ENCODE measurements at regions of chr20 and their contacts with region 1.

Region 1: GRCh38 chr20:36573103-36573794 is at the start of gene TGIF2:
- DNase-seq: peak; percentile 92
- ATAC-seq: peak; percentile 72
- H3K4me3 ChIP-seq: peak within 1 kb of the TSS; percentile 86 to 90 (median 86)
- H3K27ac ChIP-seq: peak within 1 kb of the TSS; percentile 89
- H3K4me1 ChIP-seq: peaks cover 38% of the 10 kb centered on the region
- H3K27me3 ChIP-seq: no peaks in the 10 kb centered on the region; a peak in 1 of 5 replicates
- CTCF ChIP-seq: 0 out of 2 replicates have a peak, but pooled peaks have one; percentile 9
- EP300 ChIP-seq: peak; percentile 37 to 44
- POLR2A ChIP-seq: peak; percentile 83 to 84
- RAD21 ChIP-seq: peak; percentile 55
- total RNA-seq, gene TGIF2: 53.9 and 60.3 TPM in 2 replicates

Region 2: DNA sequence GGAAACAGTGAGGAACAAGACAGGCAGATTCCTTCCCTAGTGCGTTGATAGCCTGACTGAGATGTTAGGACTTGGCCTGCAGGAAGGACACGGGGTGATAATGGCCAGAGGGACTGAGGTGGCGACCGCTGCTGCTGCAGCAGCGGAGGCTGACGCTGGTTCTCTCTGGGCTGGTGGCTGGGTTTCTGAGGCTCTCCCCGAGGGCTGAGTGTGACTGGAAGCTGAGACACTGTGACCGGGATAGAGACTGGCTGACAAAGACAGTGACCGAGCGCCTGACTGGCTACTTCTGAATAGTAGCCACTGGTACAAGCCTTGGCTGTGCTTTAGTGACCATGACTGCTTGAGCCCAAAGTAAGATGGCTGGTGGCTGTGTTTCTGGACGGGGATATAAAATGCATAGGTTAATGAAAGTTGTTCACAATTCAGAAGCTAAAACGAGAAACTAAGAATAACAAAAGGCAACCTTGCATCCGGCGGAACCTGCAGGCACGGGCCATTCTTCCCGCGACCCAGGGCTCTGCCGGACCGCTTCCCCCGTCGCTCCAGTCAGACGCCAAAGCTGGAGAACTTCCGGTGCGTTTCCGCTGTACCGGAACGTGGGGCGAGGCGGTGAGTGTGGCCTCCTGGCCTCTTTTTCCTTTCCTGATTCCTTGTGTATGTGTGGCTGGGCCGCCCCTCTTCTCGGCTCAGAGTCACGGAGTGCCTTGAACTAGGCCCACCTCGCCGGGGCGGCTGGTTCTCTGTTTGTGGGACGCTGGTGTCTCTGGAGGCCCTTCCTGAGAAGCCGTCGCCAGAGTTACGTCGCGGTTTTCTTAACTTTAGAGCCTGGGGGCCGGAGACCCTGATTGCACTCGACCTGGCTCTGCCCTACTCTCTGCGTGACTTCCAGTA is 337.1 kb before region 1 on chr20 and contains the start of gene AAR2:
- CTCF ChIA-PET with region 1: no interaction called
- POLR2A ChIA-PET with region 1: no interaction called
- in situ Hi-C with region 1: no loop called
- intact Hi-C with region 1: no loop called
- DNase-seq: peak; percentile 83
- ATAC-seq: peak; percentile 96
- H3K4me3 ChIP-seq: peak within 1 kb of the TSS; percentile 82 to 89 (median 88)
- H3K27ac ChIP-seq: peak within 1 kb of the TSS; percentile 75
- H3K4me1 ChIP-seq: peaks cover 35% of the 10 kb centered on the region
- H3K27me3 ChIP-seq: no peaks in the 10 kb centered on the region; a peak in 1 of 5 replicates
- CTCF ChIP-seq: peak; percentile 43; the same call in 1 of the 2 replicates
- EP300 ChIP-seq: peak in 1 of 2 experiments; percentile 60; a peak in 1 of 4 replicates
- POLR2A ChIP-seq: peak; percentile 94 to 96
- RAD21 ChIP-seq: peak; percentile 20
- total RNA-seq, gene AAR2: 46.2 and 56.5 TPM in 2 replicates

Region 3: GRCh38 chr20:36460648-36461599 is 112.3 kb before region 1 on chr20:
- CTCF ChIA-PET with region 1: no interaction called
- POLR2A ChIA-PET with region 1: interaction called, 5 read pairs
- in situ Hi-C with region 1: no loop called
- intact Hi-C with region 1: loop called (anchors 10 kb)
- DNase-seq: peak; percentile 89
- ATAC-seq: peak; percentile 63
- H3K4me3 ChIP-seq: peak overlapping the region in 2 of 3 experiments; percentile 71 to 90; a peak in 4 of 6 replicates
- H3K27ac ChIP-seq: peak overlapping the region; percentile 57
- H3K4me1 ChIP-seq: peaks cover 52% of the 10 kb centered on the region
- H3K27me3 ChIP-seq: no peaks in the 10 kb centered on the region; a peak in 1 of 5 replicates
- CTCF ChIP-seq: peak; percentile 31; the same call in 1 of the 2 replicates
- EP300 ChIP-seq: peak; percentile 39 to 55; a peak in 2 of 4 replicates
- POLR2A ChIP-seq: peak; percentile 76 to 83
- RAD21 ChIP-seq: peak; percentile 61

Region 4: DNA sequence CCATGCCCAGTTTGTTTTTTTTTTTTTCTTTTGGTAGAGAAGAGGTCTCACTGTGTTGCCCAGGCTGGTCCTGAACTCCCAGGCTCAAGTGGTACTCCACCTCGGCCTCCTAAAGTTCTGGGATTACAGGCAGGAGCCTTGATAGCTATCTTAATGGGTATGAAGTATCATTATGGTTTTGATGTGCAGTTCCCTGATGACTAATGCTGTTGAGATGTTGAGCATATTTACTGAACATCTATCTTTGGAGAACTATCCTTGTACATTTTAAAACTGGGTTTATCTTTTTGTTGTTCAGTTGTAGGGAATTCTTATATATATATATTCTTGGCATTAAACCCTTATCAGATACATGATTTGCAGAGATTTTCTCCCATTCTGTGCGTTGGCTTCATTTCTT is 53.3 kb before region 1 on chr20:
- CTCF ChIA-PET with region 1: no interaction called
- POLR2A ChIA-PET with region 1: no interaction called
- in situ Hi-C with region 1: no loop called
- intact Hi-C with region 1: no loop called
- DNase-seq: no peak
- ATAC-seq: no peak
- H3K4me3 ChIP-seq: no peak overlapping the region
- H3K27ac ChIP-seq: no peak overlapping the region
- H3K4me1 ChIP-seq: no peaks in the 10 kb centered on the region
- H3K27me3 ChIP-seq: no peaks in the 10 kb centered on the region
- CTCF ChIP-seq: no peak
- EP300 ChIP-seq: no peak
- POLR2A ChIP-seq: no peak
- RAD21 ChIP-seq: no peak

Region 5: GRCh38 chr20:36550797-36551299 is 22.4 kb before region 1 on chr20:
- CTCF ChIA-PET with region 1: interaction called, 4 read pairs
- POLR2A ChIA-PET with region 1: interaction called, 6 read pairs
- in situ Hi-C with region 1: no loop called
- intact Hi-C with region 1: loop called (anchors 2 kb)
- DNase-seq: no peak
- ATAC-seq: no peak
- H3K4me3 ChIP-seq: no peak overlapping the region; a peak in 1 of 6 replicates
- H3K27ac ChIP-seq: no peak overlapping the region
- H3K4me1 ChIP-seq: peaks cover 51% of the 10 kb centered on the region
- H3K27me3 ChIP-seq: no peaks in the 10 kb centered on the region
- CTCF ChIP-seq: no peak
- EP300 ChIP-seq: no peak
- POLR2A ChIP-seq: no peak
- RAD21 ChIP-seq: no peak

Region 6: DNA sequence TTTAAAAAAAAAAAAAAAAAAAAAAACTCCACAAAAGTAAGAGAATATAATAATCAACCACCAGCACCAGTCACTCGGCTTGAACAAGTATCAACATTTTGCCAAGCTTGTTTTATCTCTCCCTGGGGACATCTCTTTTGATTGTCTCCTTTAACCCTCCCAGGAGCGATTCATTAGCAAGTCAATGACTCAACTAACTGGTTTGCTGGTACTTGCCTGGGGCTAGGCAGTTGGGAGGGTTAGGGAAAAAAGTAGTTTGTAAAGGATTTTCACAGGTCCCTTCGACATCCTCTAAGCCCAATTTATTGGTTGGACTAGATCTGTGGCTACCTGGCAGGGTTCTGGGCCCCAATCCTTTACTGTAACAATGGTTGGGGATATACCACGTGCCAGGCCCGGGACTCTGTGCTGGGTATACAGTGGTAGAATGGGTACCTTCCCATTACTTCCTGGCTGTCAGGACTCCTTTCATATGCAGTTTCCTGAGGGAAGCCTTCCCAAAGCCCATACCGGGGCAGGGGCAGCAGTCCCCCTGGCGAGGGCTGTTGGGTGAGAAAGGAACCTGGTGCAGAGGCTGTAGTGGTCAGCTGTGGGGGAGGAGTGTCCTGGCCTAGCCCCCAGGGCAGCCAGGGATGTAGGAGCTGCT is 12.3 kb after region 1 on chr20:
- CTCF ChIA-PET with region 1: interaction called, 3 read pairs
- POLR2A ChIA-PET with region 1: interaction called, 28 read pairs
- in situ Hi-C with region 1: no loop called
- intact Hi-C with region 1: no loop called
- DNase-seq: no peak
- ATAC-seq: peak; percentile 6; the same call in 1 of the 3 replicates
- H3K4me3 ChIP-seq: no peak overlapping the region
- H3K27ac ChIP-seq: no peak overlapping the region
- H3K4me1 ChIP-seq: no peaks in the 10 kb centered on the region
- H3K27me3 ChIP-seq: no peaks in the 10 kb centered on the region
- CTCF ChIP-seq: no peak
- EP300 ChIP-seq: no peak
- POLR2A ChIP-seq: no peak
- RAD21 ChIP-seq: no peak

Region 7: GRCh38 chr20:36591854-36592641 is 18.8 kb after region 1 on chr20:
- CTCF ChIA-PET with region 1: interaction called, 10 read pairs
- POLR2A ChIA-PET with region 1: interaction called, 11 read pairs
- in situ Hi-C with region 1: no loop called
- intact Hi-C with region 1: loop called (anchors 1 kb)
- DNase-seq: peak; percentile 73
- ATAC-seq: peak; percentile 57
- H3K4me3 ChIP-seq: no peak overlapping the region
- H3K27ac ChIP-seq: no peak overlapping the region
- H3K4me1 ChIP-seq: no peaks in the 10 kb centered on the region
- H3K27me3 ChIP-seq: no peaks in the 10 kb centered on the region
- CTCF ChIP-seq: peak; percentile 79
- EP300 ChIP-seq: no peak
- POLR2A ChIP-seq: no peak
- RAD21 ChIP-seq: peak; percentile 69

Region 8: DNA sequence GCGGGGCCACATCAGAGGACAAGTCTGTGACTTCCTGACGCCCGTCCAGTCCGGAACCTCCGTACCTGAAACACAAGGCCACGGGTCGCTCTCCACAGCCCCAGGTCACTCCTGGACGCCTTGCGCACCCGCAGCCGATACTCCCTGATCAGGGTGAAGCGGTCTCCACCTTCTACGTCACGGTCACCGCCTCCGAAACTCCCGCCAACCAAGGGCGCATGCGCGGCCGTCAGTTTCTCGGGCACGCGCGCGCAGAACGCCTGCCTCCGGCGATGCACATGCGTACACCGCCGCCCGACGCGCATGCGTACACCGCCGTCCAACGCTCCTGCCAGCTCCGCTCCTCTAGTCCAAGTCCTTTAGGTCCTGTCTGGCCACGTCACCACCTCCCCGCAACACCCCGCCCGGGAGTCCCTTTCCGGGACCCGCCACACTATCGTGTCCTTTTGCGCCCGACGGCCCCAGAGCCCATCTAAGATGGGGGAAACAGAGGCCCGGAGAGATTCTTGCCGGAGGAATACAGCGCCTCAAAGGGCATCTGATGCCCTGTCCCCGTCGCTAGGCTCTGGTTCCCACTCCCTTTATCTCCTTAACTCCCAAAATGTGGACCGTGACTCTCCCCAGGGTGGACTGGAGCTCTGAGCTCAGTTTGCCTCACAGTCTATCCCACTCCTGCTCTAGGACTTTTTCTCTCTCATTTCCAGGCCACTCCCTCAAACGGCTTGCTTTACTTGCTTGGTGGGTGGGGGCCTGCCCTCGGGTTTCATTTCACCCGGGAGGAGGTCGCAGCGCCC is 200.5 kb after region 1 on chr20 and contains the start of gene DSN1:
- CTCF ChIA-PET with region 1: no interaction called
- POLR2A ChIA-PET with region 1: interaction called, 14 read pairs
- in situ Hi-C with region 1: no loop called
- intact Hi-C with region 1: no loop called
- DNase-seq: peak; percentile 98
- ATAC-seq: peak; percentile 87
- H3K4me3 ChIP-seq: peak within 1 kb of the TSS; percentile 67 to 99 (median 92)
- H3K27ac ChIP-seq: peak within 1 kb of the TSS; percentile 94
- H3K4me1 ChIP-seq: peaks cover 34% of the 10 kb centered on the region
- H3K27me3 ChIP-seq: peaks cover 0 to 2% of the 10 kb centered on the region in 2 experiments; a peak in 2 of 5 replicates
- CTCF ChIP-seq: no peak; the same call in 1 of the 2 replicates
- EP300 ChIP-seq: no peak; a peak in 1 of 4 replicates
- POLR2A ChIP-seq: peak; percentile 85 to 94
- RAD21 ChIP-seq: peak; percentile 82
- total RNA-seq, gene DSN1: 53.7 and 82.4 TPM in 2 replicates